GM12878 (cell line): ENCODE measurements at regions of chr6 and their contacts with region 1.

Region 1: GRCh38 chr6:139219271-139219729 is 72.5 kb downstream of the TXLNB start:
- DNase-seq: peak; percentile 82
- ATAC-seq: peak; percentile 100
- H3K4me3 ChIP-seq: no peak overlapping the region
- H3K27ac ChIP-seq: peak overlapping the region; percentile 20; the same call in 1 of the 2 replicates
- H3K4me1 ChIP-seq: peaks cover 3% of the 10 kb centered on the region; the same call in 1 of the 2 replicates
- H3K27me3 ChIP-seq: no peaks in the 10 kb centered on the region
- CTCF ChIP-seq: peak; percentile 88 to 99 (median 93); a peak in 5 of 6 replicates
- EP300 ChIP-seq: peak in 1 of 2 experiments; percentile 25; a peak in 1 of 4 replicates
- POLR2A ChIP-seq: peak; percentile 44; the same call in 1 of the 2 replicates
- RAD21 ChIP-seq: peak; percentile 99

Region 2: GRCh38 chr6:139204978-139205377 is 14.3 kb before region 1 on chr6:
- CTCF ChIA-PET with region 1: interaction called, 11 read pairs
- POLR2A ChIA-PET with region 1: no interaction called
- RAD21 ChIA-PET with region 1: interaction called, 6 read pairs
- SMC1A ChIA-PET with region 1: interaction called, 3 read pairs
- in situ Hi-C with region 1: no loop called
- intact Hi-C with region 1: no loop called
- DNase-seq: no peak
- ATAC-seq: no peak
- H3K4me3 ChIP-seq: no peak overlapping the region
- H3K27ac ChIP-seq: no peak overlapping the region
- H3K4me1 ChIP-seq: no peaks in the 10 kb centered on the region
- H3K27me3 ChIP-seq: no peaks in the 10 kb centered on the region
- CTCF ChIP-seq: no peak
- EP300 ChIP-seq: no peak
- POLR2A ChIP-seq: no peak
- RAD21 ChIP-seq: no peak

Region 3: GRCh38 chr6:139250296-139251044 is 31.2 kb after region 1 on chr6:
- CTCF ChIA-PET with region 1: interaction called, 15 read pairs
- POLR2A ChIA-PET with region 1: no interaction called
- RAD21 ChIA-PET with region 1: interaction called, 14 read pairs
- SMC1A ChIA-PET with region 1: interaction called, 10 read pairs
- in situ Hi-C with region 1: no loop called
- intact Hi-C with region 1: no loop called
- DNase-seq: no peak
- ATAC-seq: peak; percentile 99
- H3K4me3 ChIP-seq: no peak overlapping the region
- H3K27ac ChIP-seq: no peak overlapping the region; the same call in 1 of the 2 replicates
- H3K4me1 ChIP-seq: peaks cover 13% of the 10 kb centered on the region
- H3K27me3 ChIP-seq: no peaks in the 10 kb centered on the region
- CTCF ChIP-seq: peak; percentile 63 to 89 (median 79)
- EP300 ChIP-seq: no peak
- POLR2A ChIP-seq: no peak
- RAD21 ChIP-seq: peak; percentile 59

Region 4: GRCh38 chr6:139291813-139292619 is 72.7 kb after region 1 on chr6 and contains the start of gene TXLNB:
- CTCF ChIA-PET with region 1: interaction called, 10 read pairs
- POLR2A ChIA-PET with region 1: interaction called, 5 read pairs
- RAD21 ChIA-PET with region 1: interaction called, 23 read pairs
- SMC1A ChIA-PET with region 1: interaction called, 59 read pairs
- in situ Hi-C with region 1: no loop called
- intact Hi-C with region 1: loop called (anchors 2 kb)
- DNase-seq: peak; percentile 83
- ATAC-seq: peak; percentile 88
- H3K4me3 ChIP-seq: peak within 1 kb of the TSS; percentile 40
- H3K27ac ChIP-seq: peak within 1 kb of the TSS; percentile 88
- H3K4me1 ChIP-seq: peaks cover 35% of the 10 kb centered on the region
- H3K27me3 ChIP-seq: no peaks in the 10 kb centered on the region
- CTCF ChIP-seq: no peak
- EP300 ChIP-seq: peak; percentile 46 to 81; a peak in 2 of 4 replicates
- POLR2A ChIP-seq: 0 out of 2 replicates have a peak, but pooled peaks have one; percentile 51
- RAD21 ChIP-seq: no peak; the same call in 1 of the 2 replicates
- polyA plus RNA-seq, gene TXLNB: 0.07 to 0.10 TPM

Region 5: DNA sequence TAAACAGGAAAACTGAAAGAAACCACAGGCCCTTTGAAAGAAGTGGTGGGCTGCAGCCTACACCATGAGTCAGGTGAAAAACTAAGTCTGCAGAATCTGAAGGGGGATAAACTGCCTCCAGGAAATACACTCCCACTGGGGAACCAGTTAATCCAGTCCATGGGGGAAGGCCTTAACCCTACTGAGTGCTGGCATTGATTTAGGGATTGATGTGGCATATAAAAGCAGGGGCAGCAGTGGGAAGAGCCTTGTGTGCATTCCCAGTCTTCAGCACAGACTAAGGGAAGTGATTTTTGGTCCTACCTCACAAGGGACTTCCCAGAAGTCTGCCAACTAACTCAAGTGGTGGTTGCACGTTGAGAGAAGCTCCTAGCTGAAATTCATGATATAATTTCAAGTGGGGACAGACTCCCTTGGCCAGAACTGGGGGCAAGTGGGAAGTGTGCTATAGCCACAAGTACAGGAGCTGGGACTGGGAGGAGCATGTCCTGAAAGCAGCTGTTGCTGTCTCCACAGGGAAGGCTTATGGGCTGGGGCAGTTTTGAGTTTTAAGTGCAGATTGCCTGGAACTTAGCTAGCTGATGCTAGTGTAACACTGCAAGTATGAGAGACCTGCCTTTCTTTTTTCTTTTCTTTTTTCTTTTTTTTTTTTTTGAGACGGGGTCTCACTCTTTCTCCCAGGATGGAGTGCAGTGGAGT is 123.9 kb after region 1 on chr6:
- CTCF ChIA-PET with region 1: interaction called, 15 read pairs
- POLR2A ChIA-PET with region 1: no interaction called
- RAD21 ChIA-PET with region 1: interaction called, 16 read pairs
- SMC1A ChIA-PET with region 1: interaction called, 5 read pairs
- in situ Hi-C with region 1: no loop called
- intact Hi-C with region 1: no loop called
- DNase-seq: no peak
- ATAC-seq: peak; percentile 27; the same call in 2 of the 3 replicates
- H3K4me3 ChIP-seq: no peak overlapping the region
- H3K27ac ChIP-seq: 0 out of 2 replicates have a peak overlapping the region, but pooled peaks have one; percentile 0
- H3K4me1 ChIP-seq: peaks cover 6% of the 10 kb centered on the region
- H3K27me3 ChIP-seq: no peaks in the 10 kb centered on the region
- CTCF ChIP-seq: no peak
- EP300 ChIP-seq: no peak
- POLR2A ChIP-seq: no peak
- RAD21 ChIP-seq: no peak